ENCODE measurements at regions of chr7 and their contacts with region 1.

Region 1: DNA sequence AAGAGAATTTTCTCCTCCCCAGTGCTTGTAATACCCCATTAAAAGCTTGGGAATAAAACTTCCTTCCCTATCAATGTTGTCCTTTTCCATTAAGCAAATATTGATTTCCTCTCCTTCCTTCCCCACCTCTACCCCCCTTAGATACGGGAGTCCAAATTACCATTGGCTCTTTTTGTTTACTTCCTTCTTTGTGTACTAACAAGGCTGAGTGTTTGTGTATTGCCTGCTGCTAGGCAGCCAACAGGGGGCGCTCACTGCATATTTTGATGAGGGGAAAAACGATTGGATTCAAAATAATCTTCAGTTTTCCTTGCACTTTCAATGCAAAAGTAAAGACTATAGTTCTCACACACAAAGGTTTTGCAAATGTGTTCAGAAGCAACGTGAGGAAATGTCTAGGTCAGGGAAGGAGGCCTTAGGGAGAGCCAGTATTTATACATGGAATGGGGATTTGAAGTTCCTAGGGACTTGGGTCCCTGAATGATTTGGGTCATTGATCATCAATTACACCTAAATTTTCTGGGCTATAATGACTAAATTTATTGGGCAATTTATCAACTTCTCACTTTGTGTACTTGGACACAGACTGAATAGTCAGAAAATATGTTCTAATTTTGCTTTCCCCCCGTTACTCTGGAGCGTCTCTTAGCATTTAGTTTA is 23.6 kb upstream of the VPS41 start:
- DNase-seq: peak; percentile 91
- H3K4me3 Mint-ChIP-seq: peak overlapping the region; percentile 9
- H3K27ac Mint-ChIP-seq: peak overlapping the region; percentile 41
- H3K4me1 Mint-ChIP-seq: peaks cover 75% of the 10 kb centered on the region
- H3K27me3 Mint-ChIP-seq: no peaks in the 10 kb centered on the region
- CTCF ChIP-seq: peak; percentile 97

Region 2: GRCh38 chr7:38831259-38831996 is 101.2 kb before region 1 on chr7:
- CTCF ChIA-PET with region 1: interaction called, 4 read pairs
- intact Hi-C with region 1: loop called (anchors 1 kb)
- DNase-seq: peak; percentile 15
- H3K4me3 Mint-ChIP-seq: peak overlapping the region; percentile 39
- H3K27ac Mint-ChIP-seq: peak overlapping the region; percentile 63
- H3K4me1 Mint-ChIP-seq: peaks cover 73% of the 10 kb centered on the region
- H3K27me3 Mint-ChIP-seq: no peaks in the 10 kb centered on the region
- CTCF ChIP-seq: no peak

Region 3: DNA sequence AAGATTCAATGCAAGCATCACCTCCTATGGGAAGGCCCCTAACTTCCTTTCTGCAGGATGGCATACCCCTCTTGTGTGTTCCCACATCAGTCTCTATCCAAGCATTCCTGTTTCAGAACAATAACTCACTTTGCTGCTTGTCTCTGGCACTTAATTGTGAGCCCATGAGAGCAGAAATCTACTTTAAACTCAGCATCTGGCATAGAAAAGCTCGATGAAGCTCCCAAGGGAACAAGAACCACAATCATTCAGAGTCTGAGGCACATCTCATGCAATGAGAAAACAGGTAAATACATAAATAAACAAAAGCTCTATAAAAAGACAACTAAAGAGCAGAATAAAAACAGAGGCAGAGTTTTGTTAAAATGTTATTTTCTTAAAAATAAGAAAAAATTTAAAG is 89.9 kb before region 1 on chr7:
- CTCF ChIA-PET with region 1: no interaction called
- intact Hi-C with region 1: no loop called
- DNase-seq: no peak
- H3K4me3 Mint-ChIP-seq: no peak overlapping the region
- H3K27ac Mint-ChIP-seq: no peak overlapping the region
- H3K4me1 Mint-ChIP-seq: peaks cover 50% of the 10 kb centered on the region
- H3K27me3 Mint-ChIP-seq: no peaks in the 10 kb centered on the region
- CTCF ChIP-seq: no peak

Region 4: DNA sequence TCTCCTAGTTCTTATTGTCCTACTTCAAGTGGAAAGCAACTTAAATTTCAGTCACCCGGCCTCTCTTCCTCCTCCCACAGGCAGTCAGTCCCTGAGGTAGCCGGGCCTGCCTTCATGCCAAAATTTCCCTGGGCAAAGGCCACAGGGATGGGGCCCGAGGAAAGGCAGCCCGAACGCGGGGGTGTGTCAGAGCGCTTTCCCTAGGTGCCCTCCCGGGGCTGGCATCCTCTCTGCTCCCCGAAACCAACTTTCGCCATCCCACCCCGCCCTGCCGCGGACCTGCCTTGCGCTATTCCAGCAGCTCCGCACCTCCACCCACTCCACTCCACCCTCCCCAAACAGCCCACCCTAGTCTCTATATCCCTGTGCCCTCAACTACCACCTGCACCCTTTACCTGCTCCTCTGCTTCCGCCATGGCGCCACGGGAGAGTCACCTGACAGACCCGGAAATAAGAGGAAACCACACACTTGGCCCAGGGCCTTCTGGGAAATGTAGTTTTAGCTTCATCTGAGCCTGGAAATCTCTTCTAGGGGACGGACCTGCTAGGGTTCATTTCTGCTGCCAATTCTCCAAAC is 23.8 kb before region 1 on chr7 and contains the start of gene VPS41:
- CTCF ChIA-PET with region 1: interaction called, 11 read pairs
- intact Hi-C with region 1: no loop called
- DNase-seq: peak; percentile 90
- H3K4me3 Mint-ChIP-seq: peak within 1 kb of the TSS; percentile 83
- H3K27ac Mint-ChIP-seq: peak within 1 kb of the TSS; percentile 75
- H3K4me1 Mint-ChIP-seq: peaks cover 51% of the 10 kb centered on the region
- H3K27me3 Mint-ChIP-seq: no peaks in the 10 kb centered on the region
- CTCF ChIP-seq: no peak
- total RNA-seq, gene VPS41: 249 and 292 TPM in 2 replicates

Region 5: DNA sequence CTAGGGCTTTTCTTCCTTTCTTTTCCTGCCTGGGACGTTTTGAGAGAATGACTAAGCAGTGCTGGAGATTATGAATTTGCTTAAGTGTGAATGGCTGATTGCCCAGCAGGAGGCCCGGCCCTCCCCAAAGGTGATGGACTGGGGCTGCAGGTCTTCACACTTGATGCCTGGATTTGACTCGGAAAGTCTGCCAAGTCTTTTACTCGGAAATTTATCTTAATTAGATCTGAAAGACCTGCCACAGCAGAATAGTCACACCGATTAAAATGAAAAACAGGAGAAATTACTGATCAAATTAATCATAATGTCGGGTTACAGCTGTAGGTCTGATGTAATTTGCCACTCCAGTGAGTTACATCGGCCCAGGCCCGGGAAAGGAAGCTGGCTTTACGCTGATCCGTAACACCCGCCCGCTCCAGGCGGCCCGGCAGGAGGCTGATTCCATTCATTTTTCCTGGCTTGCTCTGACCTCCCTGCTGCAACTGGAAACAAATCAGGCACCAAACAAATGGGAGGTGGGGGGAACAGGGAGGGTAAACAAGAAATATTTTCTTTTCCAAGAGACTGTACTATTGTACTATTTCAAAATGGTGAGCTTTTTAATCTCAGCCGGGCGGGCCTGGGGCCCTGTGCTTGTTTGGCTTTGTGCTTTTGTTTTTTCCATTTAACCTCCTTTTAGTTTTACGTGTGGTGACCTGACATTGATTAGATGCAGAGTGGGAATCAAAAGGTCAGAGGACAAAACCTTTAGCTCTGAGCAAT is 421.2 kb after region 1 on chr7:
- CTCF ChIA-PET with region 1: no interaction called
- intact Hi-C with region 1: loop called (anchors 5 kb)
- DNase-seq: peak; percentile 77
- H3K4me3 Mint-ChIP-seq: peak overlapping the region; percentile 44
- H3K27ac Mint-ChIP-seq: peak overlapping the region; percentile 78
- H3K4me1 Mint-ChIP-seq: peaks cover 26% of the 10 kb centered on the region
- H3K27me3 Mint-ChIP-seq: no peaks in the 10 kb centered on the region
- CTCF ChIP-seq: peak; percentile 70

Region 6: DNA sequence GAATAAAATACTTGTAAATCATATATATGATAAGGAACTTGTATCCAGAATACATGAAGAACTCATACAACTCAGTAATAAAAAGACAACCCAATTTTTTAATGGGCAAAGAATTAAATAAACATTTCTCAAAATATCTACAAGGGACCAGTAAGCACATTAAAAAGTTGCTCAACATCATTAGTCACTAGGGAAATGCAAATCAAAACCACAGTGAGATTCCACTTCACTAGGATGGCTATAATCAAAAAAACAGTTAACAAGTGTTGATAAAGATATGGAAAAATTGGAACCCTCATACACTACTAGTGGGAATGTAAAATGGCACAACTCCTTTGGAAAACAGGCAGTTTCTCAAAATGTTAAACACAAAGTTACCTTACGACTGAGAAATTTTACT is 593.3 kb after region 1 on chr7:
- CTCF ChIA-PET with region 1: no interaction called
- intact Hi-C with region 1: loop called (anchors 2 kb)
- DNase-seq: no peak
- H3K4me3 Mint-ChIP-seq: no peak overlapping the region
- H3K27ac Mint-ChIP-seq: no peak overlapping the region
- H3K4me1 Mint-ChIP-seq: peaks cover 3% of the 10 kb centered on the region
- H3K27me3 Mint-ChIP-seq: peaks cover 7% of the 10 kb centered on the region
- CTCF ChIP-seq: no peak